B cell (primary cell): ENCODE measurements at regions of chr7 and their contacts with region 1.

Region 1: GRCh38 chr7:24705461-24705954 is 51.8 kb downstream of the GSDME start:
- DNase-seq: peak; percentile 16
- ATAC-seq: peak; percentile 39
- H3K4me3 ChIP-seq: no peak overlapping the region
- H3K4me3 Mint-ChIP-seq: no peak overlapping the region
- H3K27ac ChIP-seq: no peak overlapping the region
- H3K27ac Mint-ChIP-seq: peak overlapping the region; percentile 28
- H3K4me1 ChIP-seq: peaks cover 11 to 12% of the 10 kb centered on the region in 2 donors
- H3K4me1 Mint-ChIP-seq: peaks cover 13% of the 10 kb centered on the region
- H3K27me3 ChIP-seq: no peaks in the 10 kb centered on the region
- H3K27me3 Mint-ChIP-seq: no peaks in the 10 kb centered on the region
- CTCF ChIP-seq: no peak

Region 2: DNA sequence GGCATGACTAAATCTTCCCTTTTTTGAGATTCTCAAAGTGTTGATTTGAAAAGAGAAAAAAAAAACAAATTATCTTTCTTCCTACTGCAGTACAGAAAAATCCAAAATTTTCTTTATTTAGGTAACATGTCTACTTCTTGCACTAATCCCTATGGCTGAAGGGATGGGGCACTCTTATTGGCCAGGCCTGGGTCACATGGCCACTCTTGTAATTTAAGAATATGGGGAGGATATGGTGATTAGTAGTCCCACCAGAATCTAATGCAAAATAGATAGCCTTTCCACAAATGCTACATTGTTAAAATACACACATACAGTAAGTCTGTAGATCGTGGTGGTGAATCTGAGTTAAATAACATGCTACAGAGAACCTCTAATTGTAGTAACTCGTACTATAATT is 139.2 kb before region 1 on chr7:
- CTCF ChIA-PET with region 1: no interaction called
- POLR2A ChIA-PET with region 1: no interaction called
- intact Hi-C with region 1: no loop called
- DNase-seq: no peak
- ATAC-seq: no peak
- H3K4me3 ChIP-seq: no peak overlapping the region
- H3K4me3 Mint-ChIP-seq: no peak overlapping the region
- H3K27ac ChIP-seq: no peak overlapping the region
- H3K27ac Mint-ChIP-seq: no peak overlapping the region
- H3K4me1 ChIP-seq: no peaks in the 10 kb centered on the region
- H3K4me1 Mint-ChIP-seq: no peaks in the 10 kb centered on the region
- H3K27me3 ChIP-seq: peaks cover 0 to 3% (median 0%) of the 10 kb centered on the region in 4 experiments
- H3K27me3 Mint-ChIP-seq: peaks cover 11% of the 10 kb centered on the region
- CTCF ChIP-seq: no peak

Region 3: DNA sequence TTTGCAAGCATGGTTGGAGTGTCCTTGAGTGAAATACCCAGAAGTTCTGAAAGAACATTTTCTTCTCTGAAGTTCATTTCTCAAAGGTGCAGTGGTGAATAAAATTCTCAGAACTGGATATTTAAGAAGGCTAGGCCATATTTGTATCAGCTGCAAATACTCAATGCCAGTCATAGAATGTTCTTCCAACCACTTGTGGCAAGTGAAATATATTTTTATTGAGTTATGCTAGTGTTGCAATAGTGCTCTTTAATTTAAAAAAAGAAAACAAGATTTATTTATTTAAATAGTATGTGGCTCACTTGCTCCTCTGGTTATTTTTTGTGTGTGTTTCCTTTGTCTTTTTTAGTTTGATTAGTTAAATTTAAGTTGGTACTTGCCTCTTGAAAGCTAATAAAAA is 67.8 kb before region 1 on chr7:
- CTCF ChIA-PET with region 1: no interaction called
- POLR2A ChIA-PET with region 1: no interaction called
- intact Hi-C with region 1: no loop called
- DNase-seq: no peak
- ATAC-seq: no peak
- H3K4me3 ChIP-seq: no peak overlapping the region
- H3K4me3 Mint-ChIP-seq: no peak overlapping the region
- H3K27ac ChIP-seq: no peak overlapping the region
- H3K27ac Mint-ChIP-seq: no peak overlapping the region
- H3K4me1 ChIP-seq: no peaks in the 10 kb centered on the region
- H3K4me1 Mint-ChIP-seq: no peaks in the 10 kb centered on the region
- H3K27me3 ChIP-seq: no peaks in the 10 kb centered on the region
- H3K27me3 Mint-ChIP-seq: no peaks in the 10 kb centered on the region
- CTCF ChIP-seq: no peak

Region 4: DNA sequence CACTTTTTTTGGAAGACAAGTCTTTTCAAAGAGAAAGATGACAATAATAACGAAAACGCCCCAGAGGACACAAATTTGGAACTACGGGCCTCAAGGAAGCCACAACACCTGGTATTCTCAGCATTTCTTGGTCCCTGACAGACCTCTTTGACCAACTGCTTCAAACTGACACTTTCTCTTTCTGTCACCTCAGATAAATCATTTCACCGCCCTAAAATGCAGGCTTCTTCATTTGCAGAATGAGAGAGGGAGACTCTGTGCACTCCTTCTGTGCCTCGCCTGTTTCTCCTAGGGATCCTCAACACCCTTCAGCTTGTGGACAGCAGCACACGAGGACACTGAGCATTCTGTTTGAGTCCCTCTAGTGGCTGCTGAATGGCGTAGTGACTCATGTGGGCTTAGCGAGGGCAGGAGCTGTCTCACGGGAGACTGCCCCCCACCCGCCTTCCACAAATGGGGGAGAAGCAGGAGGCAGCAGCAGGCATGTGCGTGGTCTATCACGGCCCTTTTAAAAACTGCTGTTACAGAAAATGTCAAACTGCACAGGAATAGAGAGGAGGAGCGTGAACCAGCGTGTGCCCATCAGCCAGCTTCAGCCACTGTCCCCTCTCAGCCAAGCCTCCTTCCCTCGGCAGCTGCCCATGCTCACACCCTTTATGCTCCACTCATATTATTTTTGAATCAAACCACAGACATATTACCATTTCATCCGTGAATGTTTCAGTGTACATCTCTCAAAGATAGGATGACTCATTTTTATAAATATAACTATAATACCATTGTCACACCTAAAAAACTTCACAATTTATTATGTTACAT is 10.4 kb after region 1 on chr7:
- CTCF ChIA-PET with region 1: interaction called, 13 read pairs
- POLR2A ChIA-PET with region 1: interaction called, 4 read pairs
- intact Hi-C with region 1: no loop called
- DNase-seq: peak; percentile 56
- ATAC-seq: no peak
- H3K4me3 ChIP-seq: peak overlapping the region in 1 of 5 experiments; percentile 9
- H3K4me3 Mint-ChIP-seq: peak overlapping the region; percentile 68
- H3K27ac ChIP-seq: no peak overlapping the region
- H3K27ac Mint-ChIP-seq: no peak overlapping the region
- H3K4me1 ChIP-seq: peaks cover 52 to 55% of the 10 kb centered on the region in 2 donors
- H3K4me1 Mint-ChIP-seq: peaks cover 61% of the 10 kb centered on the region
- H3K27me3 ChIP-seq: no peaks in the 10 kb centered on the region
- H3K27me3 Mint-ChIP-seq: no peaks in the 10 kb centered on the region
- CTCF ChIP-seq: peak; percentile 56